Mammary epithelial cell (primary cell): ENCODE measurements at regions of chr10 and their contacts with region 1.

Region 1: DNA sequence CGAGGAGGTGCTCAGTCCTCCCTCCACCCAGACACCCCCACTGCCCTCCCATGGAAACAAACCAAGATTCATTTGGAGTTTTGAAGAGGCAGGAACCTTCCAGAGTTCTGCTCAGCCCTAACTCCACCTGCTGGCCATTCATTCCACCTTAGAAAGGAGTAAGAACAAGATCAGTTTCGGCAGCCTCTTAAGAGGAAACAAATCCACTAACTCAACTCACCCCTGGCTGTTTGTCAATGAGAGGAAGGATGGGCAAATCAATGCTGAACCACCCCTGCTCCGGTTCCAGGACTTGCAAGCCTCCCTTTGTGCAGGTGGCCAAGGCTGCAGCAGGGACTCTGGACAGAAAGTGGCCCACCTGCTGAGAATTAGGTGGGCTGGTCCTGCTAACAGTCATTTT is 26.2 kb downstream of the CCDC3 start:
- DNase-seq: peak; percentile 15
- H3K4me3 ChIP-seq: no peak overlapping the region
- H3K27ac ChIP-seq: no peak overlapping the region
- H3K4me1 ChIP-seq: peaks cover 5% of the 10 kb centered on the region
- H3K27me3 ChIP-seq: no peaks in the 10 kb centered on the region
- CTCF ChIP-seq: peak; percentile 23 to 54

Region 2: GRCh38 chr10:12720217-12720981 is 254.9 kb before region 1 on chr10:
- CTCF ChIA-PET with region 1: no interaction called
- dilution Hi-C with region 1: no loop called
- in situ Hi-C with region 1: no loop called
- intact Hi-C with region 1: loop called (anchors 2 kb)
- DNase-seq: peak; percentile 97
- H3K4me3 ChIP-seq: no peak overlapping the region
- H3K27ac ChIP-seq: peak overlapping the region; percentile 36
- H3K4me1 ChIP-seq: peaks cover 40% of the 10 kb centered on the region
- H3K27me3 ChIP-seq: no peaks in the 10 kb centered on the region
- CTCF ChIP-seq: no peak

Region 3: GRCh38 chr10:12782537-12782936 is 192.7 kb before region 1 on chr10:
- CTCF ChIA-PET with region 1: interaction called, 4 read pairs
- dilution Hi-C with region 1: no loop called
- in situ Hi-C with region 1: no loop called
- intact Hi-C with region 1: loop called (anchors 1 kb)
- DNase-seq: peak; percentile 6
- H3K4me3 ChIP-seq: no peak overlapping the region
- H3K27ac ChIP-seq: no peak overlapping the region
- H3K4me1 ChIP-seq: no peaks in the 10 kb centered on the region
- H3K27me3 ChIP-seq: no peaks in the 10 kb centered on the region
- CTCF ChIP-seq: peak; percentile 53 to 67

Region 4: DNA sequence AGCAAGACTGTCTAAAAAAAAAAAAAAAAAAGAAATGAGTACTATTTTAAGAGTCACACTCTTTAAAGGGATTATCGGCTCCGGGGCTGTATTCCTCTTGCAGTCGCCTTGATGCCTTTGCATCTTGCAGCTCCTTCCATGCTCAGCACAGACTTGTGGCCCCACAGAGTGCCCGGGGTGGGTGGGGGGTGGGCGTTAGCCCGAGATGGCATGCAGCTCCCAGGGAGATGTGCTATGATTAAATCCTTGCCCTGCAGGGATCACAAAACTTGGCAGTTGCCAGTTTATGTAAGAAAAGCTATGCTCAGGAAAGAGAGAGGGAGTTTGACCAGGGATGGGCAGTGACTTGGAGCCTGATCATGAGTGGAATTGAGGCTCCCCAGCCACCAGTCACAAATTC is 55.7 kb before region 1 on chr10:
- CTCF ChIA-PET with region 1: no interaction called
- dilution Hi-C with region 1: no loop called
- in situ Hi-C with region 1: no loop called
- intact Hi-C with region 1: no loop called
- DNase-seq: no peak
- H3K4me3 ChIP-seq: no peak overlapping the region
- H3K27ac ChIP-seq: no peak overlapping the region
- H3K4me1 ChIP-seq: no peaks in the 10 kb centered on the region
- H3K27me3 ChIP-seq: no peaks in the 10 kb centered on the region
- CTCF ChIP-seq: no peak